Dendritic cell treated with granulocyte-macrophage colony-stimulating factor and Interleukin-4, amounts not matched to agents 40 ng/mL and 50 ng/mL, for 4 days (primary cell): ENCODE measurements at regions of chr1 and their contacts with region 1.

Region 1: GRCh38 chr1:184805667-184806295 is 51.1 kb upstream of the EDEM3 start:
- H3K4me3 Mint-ChIP-seq: no peak overlapping the region
- H3K27ac Mint-ChIP-seq: peak overlapping the region; percentile 42
- H3K4me1 Mint-ChIP-seq: peaks cover 21% of the 10 kb centered on the region
- H3K27me3 Mint-ChIP-seq: no peaks in the 10 kb centered on the region

Region 2: GRCh38 chr1:184449916-184450315 is 355.9 kb before region 1 on chr1:
- intact Hi-C with region 1: no loop called
- H3K4me3 Mint-ChIP-seq: no peak overlapping the region
- H3K27ac Mint-ChIP-seq: no peak overlapping the region
- H3K4me1 Mint-ChIP-seq: no peaks in the 10 kb centered on the region
- H3K27me3 Mint-ChIP-seq: no peaks in the 10 kb centered on the region

Region 3: DNA sequence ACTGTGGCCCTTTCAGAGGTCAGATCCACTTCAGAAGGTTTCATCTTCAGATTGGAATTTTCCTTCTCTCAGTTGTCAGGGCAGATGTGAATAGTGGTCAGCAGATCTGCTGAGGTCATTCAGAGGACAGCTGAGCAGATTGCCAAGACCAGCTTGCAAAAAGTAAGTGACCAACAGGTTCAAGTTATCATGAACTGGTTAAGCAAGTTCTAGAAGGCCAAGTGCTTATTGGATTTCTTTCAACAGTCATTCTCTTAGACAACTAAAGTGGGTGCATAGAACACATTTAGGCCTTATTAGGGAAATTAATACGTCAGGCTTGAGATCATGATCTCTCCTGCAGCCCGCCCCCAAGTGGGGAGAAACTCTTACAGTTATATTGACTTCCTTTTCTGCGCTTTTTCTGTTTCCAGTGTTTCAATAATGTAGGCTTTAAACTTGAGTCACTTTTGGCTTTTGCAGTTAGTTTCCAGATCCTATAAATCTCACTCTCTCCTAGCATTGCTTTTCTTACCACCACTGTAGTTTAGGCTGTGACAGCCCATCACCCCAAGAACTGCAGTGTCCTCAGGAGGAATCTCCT is 322.6 kb before region 1 on chr1:
- intact Hi-C with region 1: no loop called
- H3K4me3 Mint-ChIP-seq: no peak overlapping the region
- H3K27ac Mint-ChIP-seq: peak overlapping the region; percentile 75
- H3K4me1 Mint-ChIP-seq: peaks cover 25% of the 10 kb centered on the region
- H3K27me3 Mint-ChIP-seq: no peaks in the 10 kb centered on the region

Region 4: DNA sequence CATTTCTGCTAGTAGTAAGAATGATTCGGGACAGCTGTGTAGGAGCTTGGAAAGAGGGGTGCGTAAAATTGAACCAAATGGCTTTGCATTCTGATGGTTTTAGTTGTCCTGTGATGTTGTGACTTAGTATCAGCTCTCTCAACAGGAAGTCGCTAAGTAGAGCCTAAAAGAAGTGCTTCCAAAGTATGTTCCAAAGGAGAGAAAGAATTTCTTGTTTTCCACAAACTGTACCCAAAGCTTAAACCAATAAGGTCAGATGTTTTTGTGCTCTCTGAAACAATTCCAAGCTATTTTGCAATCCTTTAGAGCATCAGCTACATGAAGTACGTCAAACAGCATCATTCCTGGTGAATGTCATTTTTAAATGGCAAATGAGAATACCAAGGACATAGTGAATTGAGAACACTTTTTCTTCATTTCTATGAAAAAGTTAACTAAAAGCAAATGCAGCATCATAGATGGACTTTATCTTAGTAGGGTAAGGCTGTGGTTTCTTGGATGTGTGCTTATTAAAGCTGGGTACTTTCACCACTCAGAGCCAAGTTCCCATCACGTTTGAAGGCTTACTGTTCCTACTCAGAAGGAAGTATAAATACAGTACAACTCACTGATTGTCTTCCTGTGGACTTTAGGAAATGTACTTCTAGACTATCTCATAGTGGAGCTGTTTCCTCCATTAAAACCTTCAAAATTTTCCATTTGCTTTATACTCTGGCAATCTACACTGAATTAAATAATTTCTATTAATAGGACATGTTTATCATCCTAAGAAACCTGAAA is 270.4 kb before region 1 on chr1:
- intact Hi-C with region 1: no loop called
- H3K4me3 Mint-ChIP-seq: no peak overlapping the region
- H3K27ac Mint-ChIP-seq: no peak overlapping the region
- H3K4me1 Mint-ChIP-seq: peaks cover 15% of the 10 kb centered on the region
- H3K27me3 Mint-ChIP-seq: no peaks in the 10 kb centered on the region

Region 5: GRCh38 chr1:184982002-184982954 is 176.5 kb after region 1 on chr1:
- intact Hi-C with region 1: loop called (anchors 1 kb)
- H3K4me3 Mint-ChIP-seq: no peak overlapping the region
- H3K27ac Mint-ChIP-seq: no peak overlapping the region
- H3K4me1 Mint-ChIP-seq: peaks cover 7% of the 10 kb centered on the region
- H3K27me3 Mint-ChIP-seq: no peaks in the 10 kb centered on the region

Region 6: DNA sequence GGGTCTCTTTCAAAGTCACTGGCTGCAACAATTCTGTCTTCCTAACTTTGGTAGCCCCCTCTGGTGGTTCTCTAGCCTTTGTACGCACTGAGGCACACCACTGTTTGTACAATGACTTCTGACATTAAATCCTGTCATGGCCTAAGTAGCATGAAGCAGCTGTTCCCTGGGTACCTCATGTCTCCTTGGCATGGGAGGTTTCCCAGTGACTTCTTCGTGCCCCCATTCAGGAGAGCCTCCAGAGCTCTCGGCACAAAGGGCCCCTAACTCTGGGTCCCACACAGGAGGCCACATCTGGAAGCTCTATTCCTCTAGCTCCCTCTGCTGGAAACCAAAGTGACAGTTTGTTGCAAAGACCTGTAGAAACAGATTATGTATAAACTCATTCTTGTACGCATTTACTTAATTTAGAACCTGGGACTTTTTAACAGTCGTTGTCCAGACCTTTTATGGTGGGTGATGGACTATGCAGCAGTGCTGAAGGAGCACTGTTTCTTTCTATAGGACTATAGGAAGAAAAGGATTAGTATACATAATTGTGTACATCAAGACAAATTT is 364.6 kb after region 1 on chr1:
- intact Hi-C with region 1: loop called (anchors 2 kb)
- H3K4me3 Mint-ChIP-seq: no peak overlapping the region
- H3K27ac Mint-ChIP-seq: no peak overlapping the region
- H3K4me1 Mint-ChIP-seq: peaks cover 5% of the 10 kb centered on the region
- H3K27me3 Mint-ChIP-seq: no peaks in the 10 kb centered on the region